SK-N-SH (cell line): ENCODE measurements at regions of chr1 and their contacts with region 1.

Region 1: DNA sequence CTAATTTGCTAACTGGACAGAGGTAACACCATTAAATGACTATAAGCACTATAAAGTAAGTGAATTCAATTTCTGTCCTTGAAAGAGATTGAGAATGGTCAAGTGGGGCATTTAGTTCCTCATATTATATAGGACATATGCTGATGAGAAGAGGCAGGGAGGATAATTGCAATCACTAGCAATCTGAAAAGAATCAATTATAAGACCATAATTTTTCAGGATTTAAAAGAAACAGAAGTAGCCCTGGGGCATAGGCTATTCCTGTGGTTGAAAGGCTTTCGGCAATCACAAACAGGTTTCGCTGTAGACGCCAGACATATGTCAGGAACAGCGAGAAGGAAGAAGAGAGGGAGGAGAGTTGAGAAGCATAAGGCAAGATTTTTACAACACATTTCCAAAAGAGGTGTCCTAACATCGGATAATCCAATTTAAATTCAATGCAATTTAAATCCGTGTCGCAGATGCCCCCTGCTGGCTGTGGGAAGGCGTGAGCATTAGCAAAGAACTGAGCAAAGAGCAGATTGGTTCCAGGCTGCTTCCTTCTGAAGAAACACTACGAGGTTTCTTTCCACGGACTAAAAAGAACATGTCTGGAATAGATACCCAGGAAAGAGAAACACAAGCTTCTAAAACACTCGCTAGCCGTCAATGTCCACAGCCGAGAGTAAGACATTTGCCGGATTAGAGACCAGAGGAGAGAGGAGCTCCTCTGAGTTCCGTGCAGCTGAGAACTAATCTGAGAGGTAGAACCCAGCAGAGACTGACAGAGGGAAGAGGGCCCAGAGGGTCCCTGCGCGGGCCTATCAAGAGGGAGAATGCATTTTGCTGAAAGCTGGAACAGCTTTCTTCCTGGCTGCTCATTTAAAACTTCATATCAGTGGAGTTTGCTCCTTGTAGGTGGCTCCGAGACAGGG is 27.9 kb downstream of the RGS5 start:
- DNase-seq: peak; percentile 36
- H3K4me3 ChIP-seq: peak overlapping the region; percentile 19 to 24; a peak in 2 of 4 replicates
- H3K27ac ChIP-seq: peak overlapping the region; percentile 97 to 99
- H3K4me1 ChIP-seq: peaks cover 50 to 74% of the 10 kb centered on the region in 2 experiments
- H3K27me3 ChIP-seq: no peaks in the 10 kb centered on the region
- CTCF ChIP-seq: peak; percentile 97
- EP300 ChIP-seq: peak in 1 of 2 experiments; percentile 92; a peak in 2 of 4 replicates
- RAD21 ChIP-seq: peak; percentile 81

Region 2: DNA sequence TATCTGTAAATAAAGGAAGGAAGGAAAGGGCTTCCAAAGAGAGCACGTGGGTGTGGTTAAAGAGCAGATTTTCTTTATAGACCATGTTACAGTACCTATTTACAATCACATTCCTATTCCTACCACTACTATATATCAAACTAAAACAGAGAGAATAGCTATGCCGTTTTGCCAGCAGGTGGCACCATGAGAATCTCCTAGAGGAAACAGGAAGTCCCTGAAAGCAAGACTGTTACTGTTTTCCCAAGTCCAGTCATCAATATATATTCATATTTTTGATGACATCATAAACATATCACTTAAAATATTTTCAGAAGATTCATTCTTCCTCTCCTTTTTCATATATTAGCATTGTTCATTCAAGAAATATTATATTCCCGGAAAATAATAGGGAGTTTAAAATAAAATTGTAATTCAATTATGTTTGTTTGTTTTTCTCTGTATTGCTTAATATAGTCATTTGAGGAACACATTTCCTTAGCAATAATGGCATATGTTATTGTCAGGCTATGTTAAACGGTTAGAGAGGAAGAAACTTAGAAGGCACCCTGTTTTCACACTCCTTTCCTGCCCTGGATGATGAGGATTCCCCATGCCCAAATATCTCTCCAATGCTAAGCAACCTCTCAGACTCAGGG is 320.4 kb before region 1 on chr1:
- CTCF ChIA-PET with region 1: interaction called, 17 read pairs
- POLR2A ChIA-PET with region 1: no interaction called
- DNase-seq: peak; percentile 66
- H3K4me3 ChIP-seq: no peak overlapping the region; a peak in 1 of 4 replicates
- H3K27ac ChIP-seq: peak overlapping the region; percentile 58 to 92; a peak in 3 of 4 replicates
- H3K4me1 ChIP-seq: peaks cover 8 to 43% of the 10 kb centered on the region in 2 experiments; a peak in 3 of 4 replicates
- H3K27me3 ChIP-seq: no peaks in the 10 kb centered on the region
- CTCF ChIP-seq: peak; percentile 94
- EP300 ChIP-seq: no peak
- RAD21 ChIP-seq: peak; percentile 85

Region 3: GRCh38 chr1:163163861-163164582 is 10.8 kb before region 1 on chr1:
- CTCF ChIA-PET with region 1: interaction called, 18 read pairs
- POLR2A ChIA-PET with region 1: no interaction called
- DNase-seq: no peak
- H3K4me3 ChIP-seq: no peak overlapping the region; a peak in 1 of 4 replicates
- H3K27ac ChIP-seq: peak overlapping the region; percentile 84 to 99
- H3K4me1 ChIP-seq: peaks cover 61 to 71% of the 10 kb centered on the region in 2 experiments
- H3K27me3 ChIP-seq: no peaks in the 10 kb centered on the region
- CTCF ChIP-seq: no peak
- EP300 ChIP-seq: peak in 1 of 2 experiments; percentile 80; a peak in 3 of 4 replicates
- RAD21 ChIP-seq: 0 out of 2 replicates have a peak, but pooled peaks have one; percentile 10

Region 4: GRCh38 chr1:163186862-163187261 is 12.1 kb after region 1 on chr1:
- CTCF ChIA-PET with region 1: interaction called, 27 read pairs
- POLR2A ChIA-PET with region 1: interaction called, 9 read pairs
- DNase-seq: peak; percentile 54
- H3K4me3 ChIP-seq: no peak overlapping the region
- H3K27ac ChIP-seq: peak overlapping the region in 1 of 2 experiments; percentile 96; a peak in 3 of 4 replicates
- H3K4me1 ChIP-seq: peaks cover 2 to 76% of the 10 kb centered on the region in 2 experiments; a peak in 3 of 4 replicates
- H3K27me3 ChIP-seq: no peaks in the 10 kb centered on the region
- CTCF ChIP-seq: no peak
- EP300 ChIP-seq: peak in 1 of 2 experiments; percentile 88; a peak in 2 of 4 replicates
- RAD21 ChIP-seq: no peak

Region 5: DNA sequence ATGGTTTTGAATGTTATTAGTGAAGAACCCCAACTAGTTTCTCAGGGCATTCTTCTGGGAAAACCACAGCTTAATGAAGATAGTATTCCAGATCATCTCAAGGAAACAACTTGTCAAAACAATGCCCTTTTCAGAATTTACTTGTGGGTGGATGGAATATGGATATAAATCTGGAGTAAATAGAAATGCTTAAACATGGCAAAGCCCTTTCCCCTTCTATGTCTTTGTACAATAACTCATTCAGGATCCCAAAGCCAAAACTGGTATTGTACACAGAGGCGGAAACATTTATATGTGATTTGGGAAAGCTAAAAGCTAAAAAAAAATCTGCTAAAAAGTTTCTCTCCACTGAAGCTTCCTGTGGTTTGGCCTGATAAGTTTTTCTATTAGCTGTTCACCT is 83.4 kb after region 1 on chr1:
- CTCF ChIA-PET with region 1: no interaction called
- POLR2A ChIA-PET with region 1: no interaction called
- DNase-seq: no peak
- H3K4me3 ChIP-seq: no peak overlapping the region
- H3K27ac ChIP-seq: peak overlapping the region in 1 of 2 experiments; percentile 67; a peak in 1 of 4 replicates
- H3K4me1 ChIP-seq: no peaks in the 10 kb centered on the region
- H3K27me3 ChIP-seq: no peaks in the 10 kb centered on the region
- CTCF ChIP-seq: no peak
- EP300 ChIP-seq: no peak
- RAD21 ChIP-seq: no peak